IMR-90 (cell line): ENCODE measurements at regions of chr11 and their contacts with region 1.

Region 1: DNA sequence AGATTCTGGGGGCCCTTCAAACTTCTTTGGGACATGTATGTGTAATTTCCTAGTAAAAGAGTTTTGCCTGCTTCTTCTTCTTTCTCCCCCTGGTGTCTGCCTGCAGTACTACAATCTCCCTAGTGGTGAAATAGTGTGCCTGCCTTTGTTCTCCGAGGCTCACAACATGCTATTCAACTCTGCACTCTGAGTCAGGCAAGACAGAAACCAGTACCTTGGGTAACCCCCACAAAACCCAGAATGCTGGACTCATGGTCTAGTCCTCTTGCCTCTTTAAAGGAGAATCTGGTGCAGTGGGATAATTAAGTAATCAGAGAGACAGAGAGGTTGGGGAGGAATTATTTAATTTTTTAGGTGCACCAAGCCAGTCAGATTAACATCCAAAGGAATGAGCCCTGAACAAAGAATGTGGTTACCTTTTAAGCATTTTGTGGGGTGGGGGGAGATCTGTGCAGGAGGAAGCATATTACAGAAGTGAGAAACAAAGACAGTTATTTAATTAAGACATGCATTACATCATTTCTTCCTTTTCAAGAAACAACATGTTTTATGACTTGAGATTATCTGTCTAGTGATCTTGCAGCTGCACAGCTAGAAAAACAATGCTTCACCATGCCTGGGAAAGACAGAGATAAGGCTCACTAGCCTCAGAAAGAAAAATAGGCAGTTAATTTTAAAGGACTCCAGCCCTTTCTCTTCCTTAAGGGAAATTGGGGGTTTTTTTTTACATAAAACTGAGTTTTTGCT is 11.0 kb upstream of the MS4A6A start:
- DNase-seq: peak; percentile 11
- ATAC-seq: peak; percentile 29; the same call in 1 of the 2 replicates
- H3K4me3 ChIP-seq: no peak overlapping the region
- H3K27ac ChIP-seq: no peak overlapping the region
- H3K4me1 ChIP-seq: no peaks in the 10 kb centered on the region
- H3K27me3 ChIP-seq: no peaks in the 10 kb centered on the region
- CTCF ChIP-seq: peak; percentile 89
- POLR2A ChIP-seq: no peak
- RAD21 ChIP-seq: peak; percentile 41

Region 2: DNA sequence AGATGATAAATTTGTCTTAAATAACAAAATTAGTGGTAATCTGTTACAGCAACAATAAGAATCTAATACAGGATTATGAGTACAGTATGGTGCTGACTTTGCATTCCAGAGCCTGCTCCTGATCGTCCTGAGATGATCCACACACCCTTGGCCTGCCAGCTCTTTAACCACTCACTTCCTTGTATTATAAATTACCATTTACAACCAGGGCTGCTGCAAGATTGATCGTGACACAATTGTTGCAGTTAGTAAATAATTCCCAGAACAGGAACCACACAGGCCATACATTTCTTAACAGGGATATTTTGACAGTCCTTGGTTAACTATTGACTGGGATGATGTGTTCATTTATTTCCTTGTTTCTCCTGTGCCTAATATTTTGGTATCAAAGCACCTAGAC is 344.7 kb before region 1 on chr11:
- CTCF ChIA-PET with region 1: no interaction called
- POLR2A ChIA-PET with region 1: no interaction called
- dilution Hi-C with region 1: no loop called
- in situ Hi-C with region 1: loop called (anchors 25 kb)
- intact Hi-C with region 1: no loop called
- DNase-seq: no peak
- ATAC-seq: no peak
- H3K4me3 ChIP-seq: no peak overlapping the region
- H3K27ac ChIP-seq: no peak overlapping the region
- H3K4me1 ChIP-seq: no peaks in the 10 kb centered on the region
- H3K27me3 ChIP-seq: no peaks in the 10 kb centered on the region; the same call in 1 of the 2 replicates
- CTCF ChIP-seq: no peak
- POLR2A ChIP-seq: no peak
- RAD21 ChIP-seq: no peak

Region 3: DNA sequence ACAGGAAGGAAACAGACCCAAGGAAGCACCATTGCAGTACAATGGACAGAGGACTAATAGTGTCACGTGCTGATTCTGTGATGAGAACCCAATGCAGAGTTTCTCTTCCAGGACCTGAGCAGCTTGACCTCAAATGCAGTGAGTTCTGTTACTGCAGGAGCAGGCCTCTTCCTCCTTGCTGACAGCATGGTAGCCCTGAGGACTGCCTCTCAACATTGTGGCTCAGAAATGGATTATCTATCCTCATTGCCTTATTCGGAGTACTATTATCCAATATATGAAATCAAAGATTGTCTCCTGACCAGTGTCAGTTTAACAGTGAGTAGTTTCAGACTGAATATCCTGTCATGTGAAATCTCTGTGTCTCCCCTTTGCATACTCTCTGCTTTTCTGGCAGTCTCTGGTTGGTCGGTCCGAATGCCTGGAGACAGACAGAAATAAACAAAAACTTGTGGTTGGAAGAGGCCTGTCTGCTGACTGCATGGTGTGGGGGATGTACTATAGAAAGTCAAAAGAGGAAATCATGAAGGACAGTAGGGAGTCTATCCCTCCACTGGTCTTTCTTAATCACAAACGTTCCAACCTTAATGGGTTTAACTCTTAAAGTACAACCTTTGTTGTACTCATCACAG is 195.5 kb after region 1 on chr11:
- CTCF ChIA-PET with region 1: no interaction called
- POLR2A ChIA-PET with region 1: no interaction called
- dilution Hi-C with region 1: no loop called
- in situ Hi-C with region 1: no loop called
- intact Hi-C with region 1: no loop called
- DNase-seq: no peak
- ATAC-seq: no peak
- H3K4me3 ChIP-seq: no peak overlapping the region
- H3K27ac ChIP-seq: no peak overlapping the region
- H3K4me1 ChIP-seq: no peaks in the 10 kb centered on the region
- H3K27me3 ChIP-seq: no peaks in the 10 kb centered on the region
- CTCF ChIP-seq: no peak
- POLR2A ChIP-seq: no peak
- RAD21 ChIP-seq: no peak